Activated B cell treated with CpG ODN at 0.5 μM for 24 hours (primary cell): ENCODE measurements at regions of chr7 and their contacts with region 1.

Region 1: DNA sequence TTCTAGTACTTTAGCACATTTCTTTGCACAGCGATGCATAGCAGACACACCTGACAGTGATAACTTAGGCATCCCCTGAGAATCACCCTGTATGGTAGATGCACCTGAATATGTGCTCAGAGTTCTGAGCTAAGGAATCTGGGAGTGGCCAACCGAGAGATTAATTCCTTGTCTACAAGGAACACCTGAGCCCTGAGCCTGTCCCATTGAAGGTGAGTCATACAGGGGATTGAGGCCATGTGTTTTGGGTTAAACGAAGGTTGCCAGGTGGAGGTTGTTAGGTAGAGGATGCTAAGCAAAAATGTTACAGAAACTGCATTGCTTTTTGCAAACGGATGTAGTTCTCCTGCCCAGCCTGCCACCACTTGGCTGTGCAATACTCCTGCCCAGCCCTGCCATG is 128.9 kb downstream of the AMPH start:
- DNase-seq: no peak
- ATAC-seq: no peak
- H3K4me3 Mint-ChIP-seq: no peak overlapping the region
- H3K27ac Mint-ChIP-seq: no peak overlapping the region
- H3K4me1 Mint-ChIP-seq: no peaks in the 10 kb centered on the region
- H3K27me3 Mint-ChIP-seq: peaks cover 2% of the 10 kb centered on the region
- CTCF ChIP-seq: no peak

Region 2: DNA sequence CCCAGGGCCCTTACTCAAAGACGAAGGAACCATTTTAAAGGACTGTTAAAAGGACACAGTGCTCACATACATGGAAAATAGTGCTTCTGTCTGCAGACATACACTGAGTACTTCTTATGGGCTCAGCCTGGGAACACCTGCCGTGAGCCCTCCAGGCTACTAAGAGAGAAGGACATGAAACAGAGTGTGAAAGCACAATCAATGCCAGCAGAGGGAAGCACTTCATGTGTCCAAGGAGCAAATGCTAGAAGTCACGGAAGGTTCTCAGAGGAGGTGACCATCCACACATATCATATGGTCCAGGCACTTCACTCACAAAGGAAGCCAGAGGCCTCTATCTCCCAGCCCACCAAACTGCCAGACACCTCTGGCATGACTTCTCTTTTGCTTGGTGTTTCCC is 1069.1 kb before region 1 on chr7:
- CTCF ChIA-PET with region 1: no interaction called
- POLR2A ChIA-PET with region 1: no interaction called
- intact Hi-C with region 1: no loop called
- DNase-seq: no peak
- ATAC-seq: peak; percentile 31
- H3K4me3 Mint-ChIP-seq: no peak overlapping the region
- H3K27ac Mint-ChIP-seq: no peak overlapping the region
- H3K4me1 Mint-ChIP-seq: peaks cover 66% of the 10 kb centered on the region
- H3K27me3 Mint-ChIP-seq: no peaks in the 10 kb centered on the region
- CTCF ChIP-seq: no peak

Region 3: DNA sequence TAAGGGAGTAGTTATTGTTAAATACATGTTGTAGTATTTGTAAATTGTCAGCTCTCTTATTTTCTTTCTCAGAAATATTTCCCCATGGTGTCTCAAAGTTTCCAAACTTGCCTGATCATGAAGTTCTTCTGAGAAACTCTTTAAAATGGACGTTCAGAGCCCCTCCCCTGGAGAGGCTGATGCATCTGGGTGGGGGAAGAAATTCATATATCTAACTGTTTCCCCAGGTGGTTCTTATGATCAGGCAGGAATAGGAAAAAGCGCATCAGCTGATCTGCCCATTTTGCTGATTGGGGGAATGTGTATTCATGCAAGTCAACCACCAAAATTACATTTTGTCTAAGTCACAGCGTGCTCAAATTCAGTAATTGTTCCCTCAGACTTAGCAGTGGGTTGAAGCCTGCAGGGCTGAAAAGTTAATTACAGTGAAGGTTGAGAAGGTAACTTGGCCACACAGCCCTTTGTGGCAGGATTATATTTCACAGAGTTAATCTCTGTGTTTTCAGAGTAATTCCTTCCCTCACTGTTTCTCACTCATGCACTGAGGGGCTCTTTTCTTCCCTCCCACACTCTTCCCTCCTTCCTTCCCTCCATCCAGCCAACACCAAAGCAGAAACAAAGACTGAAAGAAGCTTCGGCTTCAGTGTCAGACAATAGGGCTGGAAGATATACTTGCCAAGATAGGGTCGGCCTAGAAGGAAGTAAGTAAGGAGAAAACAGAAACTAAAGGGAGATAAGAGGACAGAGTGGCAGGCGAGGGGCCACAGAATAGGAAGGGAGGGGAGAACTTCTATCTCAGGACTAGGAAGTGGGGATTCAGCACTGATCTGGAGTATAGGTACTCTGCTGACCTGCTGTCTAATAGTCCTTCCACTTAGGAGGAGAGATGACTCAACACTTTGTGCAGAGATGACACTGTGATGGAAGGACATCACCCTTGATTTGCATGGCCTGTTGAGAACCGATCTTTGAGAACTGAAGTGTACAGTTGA is 374.8 kb before region 1 on chr7:
- CTCF ChIA-PET with region 1: no interaction called
- POLR2A ChIA-PET with region 1: no interaction called
- intact Hi-C with region 1: no loop called
- DNase-seq: no peak
- ATAC-seq: no peak
- H3K4me3 Mint-ChIP-seq: no peak overlapping the region
- H3K27ac Mint-ChIP-seq: no peak overlapping the region
- H3K4me1 Mint-ChIP-seq: no peaks in the 10 kb centered on the region
- H3K27me3 Mint-ChIP-seq: peaks cover 18% of the 10 kb centered on the region
- CTCF ChIP-seq: no peak

Region 4: DNA sequence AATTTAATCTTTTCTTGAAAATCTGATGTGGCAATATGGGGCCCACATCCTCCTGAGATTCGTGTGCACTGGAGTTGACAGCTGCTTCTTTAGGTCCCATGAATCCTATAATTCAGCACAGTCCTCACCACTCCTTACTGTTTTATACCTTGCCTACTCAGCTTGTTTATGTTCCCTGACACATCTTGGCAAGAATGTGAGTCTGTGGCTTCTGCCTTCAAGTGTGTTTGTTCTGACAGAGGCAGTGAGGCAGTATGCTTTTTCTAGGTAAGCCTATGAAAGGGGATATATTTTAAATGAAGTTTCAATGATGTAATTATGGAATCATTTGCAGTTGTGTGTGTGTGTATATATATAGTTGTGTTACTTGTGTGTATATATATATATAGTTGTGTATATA is 22.5 kb after region 1 on chr7:
- CTCF ChIA-PET with region 1: no interaction called
- POLR2A ChIA-PET with region 1: no interaction called
- intact Hi-C with region 1: loop called (anchors 2 kb)
- DNase-seq: no peak
- ATAC-seq: no peak
- H3K4me3 Mint-ChIP-seq: no peak overlapping the region
- H3K27ac Mint-ChIP-seq: no peak overlapping the region
- H3K4me1 Mint-ChIP-seq: no peaks in the 10 kb centered on the region
- H3K27me3 Mint-ChIP-seq: peaks cover 7% of the 10 kb centered on the region
- CTCF ChIP-seq: no peak

Region 5: DNA sequence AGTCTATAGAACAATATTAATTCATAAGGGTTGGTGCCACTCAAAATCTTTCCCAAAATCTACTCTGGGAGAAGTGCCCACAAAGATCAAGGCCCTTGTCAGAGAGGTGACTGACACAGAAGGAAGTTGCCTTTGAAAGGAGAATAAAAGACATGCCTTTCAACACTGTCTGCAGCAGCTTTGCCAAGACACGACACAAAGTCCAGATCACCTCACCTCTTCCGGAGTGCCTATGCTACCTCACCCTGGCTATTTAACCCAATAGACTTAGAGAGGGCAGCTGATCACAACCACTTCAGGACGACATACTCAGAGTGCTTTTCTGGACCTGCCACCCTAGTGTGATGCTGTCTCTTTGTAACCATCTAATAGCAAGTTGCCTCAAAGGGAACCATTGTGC is 1014.9 kb after region 1 on chr7:
- CTCF ChIA-PET with region 1: no interaction called
- POLR2A ChIA-PET with region 1: no interaction called
- intact Hi-C with region 1: no loop called
- DNase-seq: no peak
- ATAC-seq: no peak
- H3K4me3 Mint-ChIP-seq: no peak overlapping the region
- H3K27ac Mint-ChIP-seq: no peak overlapping the region
- H3K4me1 Mint-ChIP-seq: peaks cover 4% of the 10 kb centered on the region
- H3K27me3 Mint-ChIP-seq: peaks cover 10% of the 10 kb centered on the region
- CTCF ChIP-seq: no peak